Sigmoid colon (tissue), 7 donors: ENCODE measurements at regions of chr12 and their contacts with region 1.

Region 1: DNA sequence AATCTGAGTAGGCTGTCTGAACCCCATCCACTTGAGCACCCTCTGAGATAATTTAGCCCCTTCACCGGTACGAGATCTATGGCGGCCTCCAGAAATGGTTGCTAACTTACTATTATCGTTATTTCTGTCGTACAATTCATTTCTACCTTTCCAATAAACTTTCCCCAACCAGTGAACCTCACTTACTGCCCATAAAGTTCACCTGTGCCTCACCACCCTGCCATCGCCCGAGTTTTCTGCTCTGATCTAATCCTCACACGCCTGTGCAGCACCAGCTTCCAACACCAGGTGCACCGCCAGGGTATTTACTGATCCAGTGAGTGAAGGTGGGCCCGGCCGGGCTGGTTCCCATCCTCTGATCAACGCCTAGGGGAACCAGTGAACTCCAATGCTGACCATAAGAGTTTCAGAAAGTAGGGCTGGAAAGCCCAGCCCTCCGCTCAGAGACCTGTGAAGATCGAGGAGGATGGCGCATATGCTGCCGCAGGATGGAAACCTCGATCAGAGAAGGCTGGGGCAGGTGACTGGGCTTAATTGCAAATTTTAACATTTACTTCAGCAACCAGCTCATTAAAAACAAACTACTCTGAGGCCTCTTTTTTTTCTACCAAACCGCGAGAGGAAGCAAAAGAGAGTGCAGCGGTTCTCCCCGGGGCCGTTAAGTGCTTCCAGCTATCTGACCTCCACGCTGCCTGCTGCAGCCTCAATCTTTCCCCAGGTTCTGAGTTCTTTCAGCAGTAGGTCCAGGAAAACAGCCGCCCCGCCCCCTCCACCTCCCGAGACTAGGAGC is 664 bp upstream of the MYL6B start:
- DNase-seq: no peak
- H3K4me3 ChIP-seq: peak overlapping the region; percentile 59 to 79 (median 68)
- H3K27ac ChIP-seq: peak overlapping the region; percentile 92 to 97 (median 94)
- H3K4me1 ChIP-seq: peaks cover 0 to 31% (median 20%) of the 10 kb centered on the region in 4 donors
- H3K27me3 ChIP-seq: no peaks in the 10 kb centered on the region
- CTCF ChIP-seq: peak in 3 of 4 experiments; percentile 13 to 63 (median 40)
- EP300 ChIP-seq: no peak
- POLR2A ChIP-seq: no peak

Region 2: GRCh38 chr12:56127888-56128669 is 23.6 kb before region 1 on chr12 and contains the start of gene ESYT1:
- intact Hi-C with region 1: loop called (anchors 2 kb)
- DNase-seq: peak; percentile 100
- H3K4me3 ChIP-seq: peak within 1 kb of the TSS; percentile 76 to 83 (median 80)
- H3K27ac ChIP-seq: peak within 1 kb of the TSS; percentile 95 to 98 (median 96)
- H3K4me1 ChIP-seq: peaks cover 0 to 46% (median 32%) of the 10 kb centered on the region in 4 donors
- H3K27me3 ChIP-seq: no peaks in the 10 kb centered on the region
- CTCF ChIP-seq: no peak
- EP300 ChIP-seq: no peak
- POLR2A ChIP-seq: peak; percentile 97 to 98
- total RNA-seq, gene ESYT1: 67.6 to 102 (median 88.7) TPM